B cell (primary cell): ENCODE measurements at regions of chr12 and their contacts with region 1.

Region 1: DNA sequence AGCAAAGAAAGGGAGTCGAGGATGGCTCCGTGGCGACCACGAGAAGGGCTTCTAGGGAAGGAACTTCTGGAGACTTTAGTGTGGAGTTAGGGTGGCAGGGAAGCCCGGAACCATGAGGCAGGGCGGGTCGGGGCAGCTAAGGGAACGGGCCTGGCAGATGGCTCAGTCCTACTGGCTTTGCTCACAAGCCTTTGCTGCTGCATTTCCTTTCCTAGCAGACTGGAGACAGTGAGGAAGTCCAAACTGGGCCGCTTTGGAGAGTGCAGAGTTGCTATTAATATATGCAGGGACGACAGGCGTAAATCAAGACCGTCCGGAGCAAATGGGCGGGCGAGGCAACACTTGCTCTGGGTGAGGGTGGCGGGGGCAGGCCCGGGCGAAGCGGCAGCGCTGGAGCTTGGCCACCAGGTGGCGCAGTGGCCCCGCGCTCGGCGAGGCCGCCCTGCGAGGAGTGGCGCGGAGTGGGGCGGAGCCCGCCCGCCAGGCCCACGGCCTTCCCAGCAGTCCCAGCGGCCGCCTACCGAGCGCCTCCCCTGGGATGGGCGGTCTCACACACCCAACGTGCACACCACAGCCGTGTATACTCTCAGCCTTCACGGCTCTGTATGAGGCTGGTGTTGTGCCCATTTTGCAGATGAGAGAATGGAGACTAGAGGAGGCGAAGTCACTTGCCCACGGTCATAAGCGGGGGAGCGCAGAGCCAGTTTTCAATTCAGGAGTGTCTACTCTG is 24.4 kb upstream of the LRTM2 start:
- DNase-seq: peak; percentile 95
- ATAC-seq: peak; percentile 92
- H3K4me3 ChIP-seq: peak overlapping the region; percentile 64 to 88 (median 67)
- H3K4me3 Mint-ChIP-seq: peak overlapping the region; percentile 98
- H3K27ac ChIP-seq: peak overlapping the region; percentile 67 to 83
- H3K27ac Mint-ChIP-seq: peak overlapping the region; percentile 97
- H3K4me1 ChIP-seq: peaks cover 14 to 37% of the 10 kb centered on the region in 2 donors
- H3K4me1 Mint-ChIP-seq: peaks cover 33% of the 10 kb centered on the region
- H3K27me3 ChIP-seq: no peaks in the 10 kb centered on the region
- H3K27me3 Mint-ChIP-seq: no peaks in the 10 kb centered on the region
- CTCF ChIP-seq: peak; percentile 90

Region 2: DNA sequence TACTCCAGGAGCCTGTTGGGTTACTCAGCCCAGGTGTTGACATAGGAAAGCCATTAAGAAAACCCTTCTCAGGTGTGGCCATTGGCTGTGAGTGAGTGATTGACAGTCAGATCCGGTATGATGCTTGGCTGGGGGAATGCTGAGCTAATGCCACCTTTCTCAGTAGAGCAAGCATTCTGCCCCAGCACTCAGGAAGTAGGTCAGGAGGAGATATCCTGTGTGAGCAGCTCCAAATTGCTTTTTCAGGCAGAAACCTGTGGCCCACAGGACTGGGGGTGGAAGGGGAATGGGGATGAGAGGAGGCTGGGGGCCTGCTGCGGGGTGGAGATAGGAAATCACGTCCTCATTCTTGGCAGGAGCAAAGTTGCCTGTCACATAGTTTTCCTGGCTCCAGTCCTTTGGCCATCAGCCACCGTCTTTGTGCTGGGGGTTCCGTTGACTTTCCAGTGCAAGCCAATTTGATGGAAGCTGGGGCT is 1188.4 kb before region 1 on chr12:
- CTCF ChIA-PET with region 1: no interaction called
- POLR2A ChIA-PET with region 1: no interaction called
- intact Hi-C with region 1: no loop called
- DNase-seq: no peak
- ATAC-seq: no peak
- H3K4me3 ChIP-seq: no peak overlapping the region
- H3K4me3 Mint-ChIP-seq: no peak overlapping the region
- H3K27ac ChIP-seq: no peak overlapping the region
- H3K27ac Mint-ChIP-seq: no peak overlapping the region
- H3K4me1 ChIP-seq: peaks cover 16 to 18% of the 10 kb centered on the region in 2 donors
- H3K4me1 Mint-ChIP-seq: peaks cover 17% of the 10 kb centered on the region
- H3K27me3 ChIP-seq: no peaks in the 10 kb centered on the region
- H3K27me3 Mint-ChIP-seq: no peaks in the 10 kb centered on the region
- CTCF ChIP-seq: no peak

Region 3: GRCh38 chr12:1634590-1635191 is 161.3 kb before region 1 on chr12:
- CTCF ChIA-PET with region 1: interaction called, 105 read pairs
- POLR2A ChIA-PET with region 1: no interaction called
- intact Hi-C with region 1: loop called (anchors 1 kb)
- DNase-seq: peak; percentile 69
- ATAC-seq: peak; percentile 50
- H3K4me3 ChIP-seq: no peak overlapping the region
- H3K4me3 Mint-ChIP-seq: no peak overlapping the region
- H3K27ac ChIP-seq: no peak overlapping the region
- H3K27ac Mint-ChIP-seq: no peak overlapping the region
- H3K4me1 ChIP-seq: peaks cover 19 to 20% of the 10 kb centered on the region in 2 donors
- H3K4me1 Mint-ChIP-seq: peaks cover 19% of the 10 kb centered on the region
- H3K27me3 ChIP-seq: peaks cover 0 to 52% (median 31%) of the 10 kb centered on the region in 4 experiments
- H3K27me3 Mint-ChIP-seq: peaks cover 30% of the 10 kb centered on the region
- CTCF ChIP-seq: peak; percentile 91

Region 4: GRCh38 chr12:1661553-1662335 is 134.2 kb before region 1 on chr12:
- CTCF ChIA-PET with region 1: interaction called, 620 read pairs
- POLR2A ChIA-PET with region 1: no interaction called
- intact Hi-C with region 1: no loop called
- DNase-seq: peak; percentile 84
- ATAC-seq: peak; percentile 90
- H3K4me3 ChIP-seq: peak overlapping the region in 4 of 5 experiments; percentile 54 to 71 (median 63)
- H3K4me3 Mint-ChIP-seq: peak overlapping the region; percentile 86
- H3K27ac ChIP-seq: peak overlapping the region in 1 of 2 donors; percentile 18
- H3K27ac Mint-ChIP-seq: peak overlapping the region; percentile 88
- H3K4me1 ChIP-seq: peaks cover 0 to 1% of the 10 kb centered on the region in 2 donors
- H3K4me1 Mint-ChIP-seq: peaks cover 18% of the 10 kb centered on the region
- H3K27me3 ChIP-seq: no peaks in the 10 kb centered on the region
- H3K27me3 Mint-ChIP-seq: no peaks in the 10 kb centered on the region
- CTCF ChIP-seq: no peak

Region 5: DNA sequence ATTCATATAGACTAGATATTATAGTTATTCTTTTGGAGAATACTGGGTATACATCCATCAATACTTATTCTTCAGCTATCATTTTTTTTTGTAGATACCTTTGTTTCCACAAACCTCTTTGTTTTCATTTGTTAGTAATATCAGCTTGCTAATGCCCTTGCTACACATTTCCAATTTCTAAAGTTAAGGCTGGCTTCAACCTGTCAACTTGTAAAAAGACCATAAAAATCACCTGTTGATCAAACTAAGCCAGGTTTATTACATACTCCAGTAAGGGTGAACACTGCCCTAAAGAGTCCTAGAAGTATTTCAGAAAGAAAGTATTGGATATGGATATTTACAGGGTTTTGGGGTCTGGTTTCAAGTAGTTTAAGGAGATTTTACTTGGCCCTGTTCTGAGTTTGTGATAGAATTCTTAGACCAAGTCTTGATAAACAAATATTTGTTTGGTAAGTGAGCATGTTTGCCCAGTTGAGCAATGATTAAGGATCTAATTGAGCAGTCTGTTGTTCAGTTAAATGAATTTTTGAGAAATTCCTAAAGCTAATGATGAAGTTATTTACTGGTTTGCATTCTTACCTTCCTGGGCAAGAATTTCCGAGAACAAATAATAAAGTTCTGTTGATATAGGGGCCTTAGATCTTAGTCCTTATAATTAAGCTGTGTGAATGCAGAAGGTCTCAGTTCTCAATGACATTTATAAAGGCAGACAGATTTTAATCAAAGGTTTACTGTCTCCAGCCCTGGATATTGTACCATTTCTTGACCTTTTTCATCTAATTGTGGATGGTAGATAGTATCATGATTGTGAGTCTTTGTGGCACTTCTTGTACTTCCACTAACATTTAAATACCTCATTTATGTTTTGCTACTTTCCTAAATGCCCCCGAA is 28.3 kb before region 1 on chr12:
- CTCF ChIA-PET with region 1: interaction called, 10 read pairs
- POLR2A ChIA-PET with region 1: no interaction called
- intact Hi-C with region 1: no loop called
- DNase-seq: no peak
- ATAC-seq: no peak
- H3K4me3 ChIP-seq: no peak overlapping the region
- H3K4me3 Mint-ChIP-seq: no peak overlapping the region
- H3K27ac ChIP-seq: no peak overlapping the region
- H3K27ac Mint-ChIP-seq: no peak overlapping the region
- H3K4me1 ChIP-seq: no peaks in the 10 kb centered on the region
- H3K4me1 Mint-ChIP-seq: peaks cover 4% of the 10 kb centered on the region
- H3K27me3 ChIP-seq: no peaks in the 10 kb centered on the region
- H3K27me3 Mint-ChIP-seq: no peaks in the 10 kb centered on the region
- CTCF ChIP-seq: no peak

Region 6: DNA sequence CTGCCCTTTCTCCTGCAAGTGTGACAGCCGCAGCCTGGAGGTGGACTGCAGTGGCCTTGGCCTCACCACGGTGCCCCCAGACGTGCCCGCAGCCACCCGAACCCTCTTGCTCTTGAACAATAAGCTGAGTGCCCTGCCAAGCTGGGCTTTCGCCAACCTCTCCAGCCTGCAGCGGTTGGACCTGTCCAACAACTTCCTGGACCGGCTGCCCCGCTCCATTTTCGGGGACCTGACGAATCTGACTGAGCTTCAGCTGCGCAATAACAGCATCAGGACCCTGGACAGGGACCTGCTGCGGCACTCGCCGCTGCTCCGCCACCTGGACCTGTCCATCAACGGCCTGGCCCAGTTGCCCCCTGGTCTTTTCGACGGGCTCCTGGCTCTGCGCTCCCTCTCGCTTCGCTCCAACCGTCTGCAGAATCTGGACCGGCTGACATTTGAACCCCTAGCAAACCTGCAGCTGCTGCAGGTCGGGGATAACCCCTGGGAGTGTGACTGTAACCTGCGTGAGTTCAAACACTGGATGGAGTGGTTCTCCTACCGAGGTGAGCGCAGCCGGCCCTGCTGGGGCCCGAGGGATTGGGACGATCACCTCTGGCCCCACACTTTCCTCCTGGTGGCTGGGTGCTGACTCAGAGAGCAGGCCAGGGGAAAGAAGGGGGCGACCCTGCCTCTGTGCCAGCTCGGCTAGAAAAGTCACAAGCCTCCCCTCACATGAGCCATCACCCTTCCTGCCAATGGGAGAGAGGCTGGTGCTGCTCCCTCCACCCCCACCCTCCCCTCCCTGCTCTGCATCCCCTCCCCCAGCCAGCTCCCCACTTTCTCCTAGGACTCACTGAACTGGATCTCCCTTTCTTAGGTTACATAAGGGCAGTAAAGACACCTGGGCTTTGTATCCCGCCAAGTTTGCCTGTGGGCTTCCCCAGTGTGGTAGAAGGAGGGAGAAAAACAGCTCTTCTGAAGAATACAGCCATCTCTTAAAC is 35.3 kb after region 1 on chr12:
- CTCF ChIA-PET with region 1: no interaction called
- POLR2A ChIA-PET with region 1: no interaction called
- intact Hi-C with region 1: no loop called
- DNase-seq: no peak
- ATAC-seq: no peak
- H3K4me3 ChIP-seq: no peak overlapping the region
- H3K4me3 Mint-ChIP-seq: no peak overlapping the region
- H3K27ac ChIP-seq: no peak overlapping the region
- H3K27ac Mint-ChIP-seq: no peak overlapping the region
- H3K4me1 ChIP-seq: no peaks in the 10 kb centered on the region
- H3K4me1 Mint-ChIP-seq: peaks cover 3% of the 10 kb centered on the region
- H3K27me3 ChIP-seq: peaks cover 0 to 21% (median 3%) of the 10 kb centered on the region in 4 experiments
- H3K27me3 Mint-ChIP-seq: peaks cover 48% of the 10 kb centered on the region
- CTCF ChIP-seq: no peak

Region 7: DNA sequence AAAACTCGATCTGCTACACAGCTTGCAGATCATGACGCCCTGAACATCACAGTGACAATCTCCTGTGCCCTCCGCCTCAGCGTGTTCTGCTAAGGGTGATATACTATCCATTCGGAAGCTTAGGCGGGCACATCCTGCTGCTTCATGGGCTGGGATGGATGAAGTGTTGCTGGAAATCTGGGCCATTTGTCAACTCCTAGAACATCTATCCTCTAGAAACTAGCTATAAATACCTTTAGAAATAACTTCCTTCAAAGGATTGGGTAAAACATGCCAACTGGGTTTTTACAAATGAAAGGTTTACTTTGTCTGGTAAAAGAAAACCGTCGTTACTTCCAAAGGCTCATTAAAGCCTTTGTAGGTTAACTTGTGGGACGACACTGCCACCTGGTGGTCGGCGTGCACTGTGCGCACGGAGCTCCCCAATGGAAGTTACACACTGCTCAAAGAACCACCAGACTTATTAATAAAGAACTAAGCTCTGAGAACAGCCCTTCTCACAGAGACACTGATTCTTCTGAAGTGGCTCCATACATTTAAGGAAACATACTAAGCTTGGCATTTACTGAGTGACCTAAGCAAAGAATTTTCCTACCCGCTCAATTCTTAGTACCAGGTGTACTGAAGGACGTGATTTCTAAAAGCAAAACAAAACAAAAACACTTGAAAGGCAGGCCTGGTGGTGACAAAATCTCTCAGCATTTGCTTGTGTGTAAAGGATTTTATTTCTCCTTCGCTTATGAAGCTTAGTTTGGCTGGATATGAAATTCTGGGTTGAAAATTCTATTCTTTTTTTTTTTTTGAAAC is 144.1 kb after region 1 on chr12:
- CTCF ChIA-PET with region 1: interaction called, 327 read pairs
- POLR2A ChIA-PET with region 1: interaction called, 17 read pairs
- intact Hi-C with region 1: loop called (anchors 1 kb)
- DNase-seq: peak; percentile 89
- ATAC-seq: peak; percentile 97
- H3K4me3 ChIP-seq: no peak overlapping the region
- H3K4me3 Mint-ChIP-seq: no peak overlapping the region
- H3K27ac ChIP-seq: no peak overlapping the region
- H3K27ac Mint-ChIP-seq: peak overlapping the region; percentile 10
- H3K4me1 ChIP-seq: peaks cover 4 to 5% of the 10 kb centered on the region in 2 donors
- H3K4me1 Mint-ChIP-seq: peaks cover 5% of the 10 kb centered on the region
- H3K27me3 ChIP-seq: no peaks in the 10 kb centered on the region
- H3K27me3 Mint-ChIP-seq: no peaks in the 10 kb centered on the region
- CTCF ChIP-seq: peak; percentile 99